ENCODE measurements at regions of chr6 and their contacts with region 1.

Region 1: GRCh38 chr6:136508701-136509392 is 41.4 kb downstream of the MAP7 start:
- DNase-seq: no peak
- ATAC-seq: no peak
- H3K4me3 Mint-ChIP-seq: no peak overlapping the region
- H3K27ac Mint-ChIP-seq: no peak overlapping the region
- H3K4me1 Mint-ChIP-seq: peaks cover 26% of the 10 kb centered on the region
- H3K27me3 Mint-ChIP-seq: no peaks in the 10 kb centered on the region

Region 2: GRCh38 chr6:136024711-136025110 is 484.1 kb before region 1 on chr6:
- CTCF ChIA-PET with region 1: no interaction called
- POLR2A ChIA-PET with region 1: no interaction called
- intact Hi-C with region 1: loop called in 1 of 2 experiments (anchors 5 kb)
- DNase-seq: no peak
- ATAC-seq: no peak
- H3K4me3 Mint-ChIP-seq: no peak overlapping the region
- H3K27ac Mint-ChIP-seq: no peak overlapping the region
- H3K4me1 Mint-ChIP-seq: no peaks in the 10 kb centered on the region
- H3K27me3 Mint-ChIP-seq: no peaks in the 10 kb centered on the region

Region 3: GRCh38 chr6:137013738-137014602 is 505.1 kb after region 1 on chr6:
- CTCF ChIA-PET with region 1: no interaction called
- POLR2A ChIA-PET with region 1: no interaction called
- intact Hi-C with region 1: no loop called
- DNase-seq: no peak
- ATAC-seq: no peak
- H3K4me3 Mint-ChIP-seq: no peak overlapping the region
- H3K27ac Mint-ChIP-seq: no peak overlapping the region
- H3K4me1 Mint-ChIP-seq: no peaks in the 10 kb centered on the region
- H3K27me3 Mint-ChIP-seq: peaks cover 41% of the 10 kb centered on the region